ENCODE measurements at regions of chr16 and their contacts with region 1.

Region 1: GRCh38 chr16:75238132-75238852 is 13.1 kb downstream of the BCAR1 start:
- DNase-seq: no peak
- ATAC-seq: no peak
- H3K4me3 Mint-ChIP-seq: no peak overlapping the region
- H3K27ac Mint-ChIP-seq: no peak overlapping the region
- H3K4me1 Mint-ChIP-seq: peaks cover 2% of the 10 kb centered on the region
- H3K27me3 Mint-ChIP-seq: peaks cover 47% of the 10 kb centered on the region
- CTCF ChIP-seq: no peak

Region 2: GRCh38 chr16:75265845-75266701 is 27.8 kb after region 1 on chr16:
- CTCF ChIA-PET with region 1: no interaction called
- POLR2A ChIA-PET with region 1: no interaction called
- intact Hi-C with region 1: loop called (anchors 5 kb)
- DNase-seq: peak; percentile 23
- ATAC-seq: peak; percentile 25
- H3K4me3 Mint-ChIP-seq: peak overlapping the region; percentile 77
- H3K27ac Mint-ChIP-seq: no peak overlapping the region
- H3K4me1 Mint-ChIP-seq: peaks cover 12% of the 10 kb centered on the region
- H3K27me3 Mint-ChIP-seq: peaks cover 46% of the 10 kb centered on the region
- CTCF ChIP-seq: no peak

Region 3: GRCh38 chr16:75379911-75380847 is 141.9 kb after region 1 on chr16:
- CTCF ChIA-PET with region 1: interaction called, 97 read pairs
- POLR2A ChIA-PET with region 1: interaction called, 3 read pairs
- intact Hi-C with region 1: loop called (anchors 1 kb)
- DNase-seq: peak; percentile 37
- ATAC-seq: peak; percentile 97
- H3K4me3 Mint-ChIP-seq: peak overlapping the region; percentile 48
- H3K27ac Mint-ChIP-seq: no peak overlapping the region
- H3K4me1 Mint-ChIP-seq: peaks cover 28% of the 10 kb centered on the region
- H3K27me3 Mint-ChIP-seq: peaks cover 70% of the 10 kb centered on the region
- CTCF ChIP-seq: no peak

Region 4: GRCh38 chr16:75385507-75386152 is 147.3 kb after region 1 on chr16:
- CTCF ChIA-PET with region 1: interaction called, 97 read pairs
- POLR2A ChIA-PET with region 1: interaction called, 3 read pairs
- intact Hi-C with region 1: loop called (anchors 1 kb)
- DNase-seq: no peak
- ATAC-seq: peak; percentile 37
- H3K4me3 Mint-ChIP-seq: no peak overlapping the region
- H3K27ac Mint-ChIP-seq: no peak overlapping the region
- H3K4me1 Mint-ChIP-seq: peaks cover 9% of the 10 kb centered on the region
- H3K27me3 Mint-ChIP-seq: peaks cover 31% of the 10 kb centered on the region
- CTCF ChIP-seq: peak; percentile 51

Region 5: GRCh38 chr16:75402821-75403475 is 164.7 kb after region 1 on chr16:
- CTCF ChIA-PET with region 1: interaction called, 14 read pairs
- POLR2A ChIA-PET with region 1: no interaction called
- intact Hi-C with region 1: loop called (anchors 1 kb)
- DNase-seq: no peak
- ATAC-seq: peak; percentile 50
- H3K4me3 Mint-ChIP-seq: no peak overlapping the region
- H3K27ac Mint-ChIP-seq: no peak overlapping the region
- H3K4me1 Mint-ChIP-seq: no peaks in the 10 kb centered on the region
- H3K27me3 Mint-ChIP-seq: no peaks in the 10 kb centered on the region
- CTCF ChIP-seq: peak; percentile 60

Measured in activated B cell treated with CpG ODN at 0.5 μM for 24 hours (primary cell).